ENCODE measurements at regions of chr7 and their contacts with region 1.

Region 1: GRCh38 chr7:116236020-116236630 is 25.8 kb downstream of the TES start:
- DNase-seq: peak; percentile 46
- H3K4me3 ChIP-seq: no peak overlapping the region
- H3K27ac ChIP-seq: no peak overlapping the region
- H3K4me1 ChIP-seq: peaks cover 8% of the 10 kb centered on the region
- H3K27me3 ChIP-seq: no peaks in the 10 kb centered on the region
- CTCF ChIP-seq: peak; percentile 45

Region 2: GRCh38 chr7:115600207-115600606 is 635.9 kb before region 1 on chr7:
- intact Hi-C with region 1: no loop called
- DNase-seq: no peak
- H3K4me3 ChIP-seq: no peak overlapping the region
- H3K27ac ChIP-seq: no peak overlapping the region
- H3K4me1 ChIP-seq: no peaks in the 10 kb centered on the region
- H3K27me3 ChIP-seq: no peaks in the 10 kb centered on the region
- CTCF ChIP-seq: no peak

Region 3: DNA sequence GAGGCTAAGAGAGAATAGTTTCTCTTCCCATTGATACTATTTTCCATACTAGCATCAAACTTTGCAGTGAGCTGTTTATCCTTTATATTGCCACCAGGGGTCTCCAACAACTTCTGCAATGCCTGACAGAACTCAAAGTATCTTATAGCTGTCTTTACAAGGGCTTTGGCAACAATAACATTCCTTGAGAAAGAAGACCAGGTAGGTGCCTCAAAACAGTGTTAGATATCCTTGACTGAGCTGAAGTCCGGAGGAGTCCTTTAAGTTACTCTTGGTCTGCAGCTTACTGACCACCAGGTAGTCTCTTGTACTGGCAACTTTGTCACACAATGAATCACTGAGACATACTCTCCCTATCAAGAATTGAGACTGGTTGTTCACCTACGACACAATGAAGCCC is 55.8 kb before region 1 on chr7:
- intact Hi-C with region 1: loop called (anchors 2 kb)
- DNase-seq: no peak
- H3K4me3 ChIP-seq: no peak overlapping the region
- H3K27ac ChIP-seq: no peak overlapping the region
- H3K4me1 ChIP-seq: no peaks in the 10 kb centered on the region
- H3K27me3 ChIP-seq: no peaks in the 10 kb centered on the region
- CTCF ChIP-seq: peak; percentile 54

Region 4: GRCh38 chr7:116340943-116341907 is 105.1 kb after region 1 on chr7:
- intact Hi-C with region 1: no loop called
- DNase-seq: no peak
- H3K4me3 ChIP-seq: no peak overlapping the region
- H3K27ac ChIP-seq: no peak overlapping the region
- H3K4me1 ChIP-seq: no peaks in the 10 kb centered on the region
- H3K27me3 ChIP-seq: no peaks in the 10 kb centered on the region
- CTCF ChIP-seq: no peak